Activated T-helper 1 cell treated with anti-CD3 and anti-CD28 coated beads, Interleukin-12 subunit alpha, Interleukin-12 subunit beta, Interleukin-2, Interleukin-4 antibody, amounts not matched to agents 30 ng/mL and 10 ng/mL and 1 ng/mL, durations not matched to agents 14 hours and 24 hours and 36 hours (primary cell): ENCODE measurements at regions of chr22 and their contacts with region 1.

Region 1: DNA sequence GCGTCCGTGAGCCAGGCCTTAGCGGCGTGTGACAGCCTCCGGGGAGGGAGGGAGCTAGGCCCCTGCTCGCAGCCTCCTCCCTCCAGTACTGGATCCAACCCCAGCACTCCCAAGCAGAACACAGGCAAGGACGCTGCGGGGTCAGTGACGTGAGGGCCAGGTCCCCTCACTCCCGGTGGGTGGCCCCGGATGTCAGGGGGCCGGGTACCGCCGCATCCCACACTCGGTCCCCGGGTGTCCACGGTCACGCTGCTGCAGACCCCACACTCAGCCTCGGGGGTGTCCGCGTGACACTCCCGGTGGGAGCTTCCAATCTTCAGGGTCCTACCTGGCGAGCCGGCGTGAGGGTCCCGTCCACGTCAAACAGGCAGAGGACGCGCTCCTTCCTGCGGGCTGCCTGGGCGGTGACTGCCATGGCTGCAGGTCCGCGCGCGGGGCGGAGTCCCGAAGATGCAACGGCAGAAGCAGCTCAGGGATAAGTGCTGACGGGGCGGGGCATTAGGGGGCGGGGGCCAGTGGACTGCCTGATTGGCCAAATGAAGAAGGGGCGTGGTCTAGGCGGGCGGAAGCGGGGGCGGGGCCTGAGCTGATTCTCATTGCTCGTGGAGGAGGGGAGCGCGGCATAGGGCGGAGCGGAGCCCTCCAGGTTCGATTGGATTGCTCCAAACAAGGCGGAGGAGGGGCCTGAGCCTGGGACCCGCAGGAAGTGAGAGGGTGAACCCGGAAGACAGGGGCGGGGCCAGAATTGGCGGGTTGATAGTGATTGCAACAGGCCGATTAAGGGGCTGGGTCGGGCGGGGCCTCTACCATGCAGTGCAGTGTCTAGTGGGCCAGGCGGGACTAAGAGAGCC is at the start of gene PMM1:
- DNase-seq: peak; percentile 100
- H3K4me3 Mint-ChIP-seq: peak within 1 kb of the TSS; percentile 92
- H3K27ac Mint-ChIP-seq: peak within 1 kb of the TSS; percentile 82
- H3K4me1 Mint-ChIP-seq: peaks cover 17% of the 10 kb centered on the region
- H3K27me3 Mint-ChIP-seq: no peaks in the 10 kb centered on the region
- total RNA-seq, gene PMM1: 21.4 and 22.6 TPM in 2 replicates

Region 2: DNA sequence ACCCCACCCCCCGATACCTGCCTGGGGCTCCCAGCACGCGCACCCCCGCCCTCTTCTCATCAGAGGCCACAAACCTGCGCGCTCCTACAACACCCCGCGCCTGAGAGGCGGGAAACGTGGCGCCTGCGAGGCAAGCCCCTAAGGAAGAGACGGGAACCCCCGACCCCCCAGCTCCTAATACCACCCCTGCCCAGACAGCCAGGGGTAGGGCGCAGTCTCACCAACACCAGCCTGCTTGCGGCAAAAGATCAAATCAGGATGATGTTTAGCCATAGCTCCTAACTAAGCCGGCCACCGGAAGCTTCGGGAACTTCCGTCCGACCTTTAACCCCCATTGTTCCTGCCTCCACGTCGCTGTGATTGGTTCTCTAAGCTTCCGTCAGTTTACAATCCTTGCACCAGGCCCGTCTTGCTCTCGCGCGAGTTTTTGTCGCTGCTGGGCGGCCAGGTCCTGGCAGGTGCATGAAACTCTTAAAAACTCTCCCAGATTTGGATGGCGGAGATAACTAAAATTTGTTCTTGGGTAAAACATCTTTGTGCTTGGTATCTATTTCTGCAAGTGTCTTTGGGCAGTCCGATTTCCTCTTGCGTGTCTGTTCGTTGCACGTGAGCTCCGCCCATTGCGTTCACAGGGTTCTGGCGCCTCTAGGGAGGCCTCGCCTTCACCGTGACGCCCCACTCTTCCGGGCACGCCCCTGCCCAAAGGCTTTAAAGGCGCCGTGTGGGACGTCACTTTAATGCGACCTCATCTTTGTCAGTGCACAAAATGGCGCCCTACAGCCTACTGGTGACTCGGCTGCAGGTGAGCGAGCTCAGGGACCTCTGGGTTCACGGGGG is 121.0 kb before region 1 on chr22 and contains the starts of genes ACO2 and PHF5A:
- intact Hi-C with region 1: loop called (anchors 1 kb)
- DNase-seq: peak; percentile 98
- H3K4me3 Mint-ChIP-seq: peak within 1 kb of the TSS; percentile 87
- H3K27ac Mint-ChIP-seq: peak within 1 kb of the TSS; percentile 99
- H3K4me1 Mint-ChIP-seq: peaks cover 22% of the 10 kb centered on the region
- H3K27me3 Mint-ChIP-seq: no peaks in the 10 kb centered on the region
- total RNA-seq, gene ACO2: 99.1 and 101 TPM in 2 replicates
- total RNA-seq, gene PHF5A: 83.7 and 96.8 TPM in 2 replicates

Region 3: DNA sequence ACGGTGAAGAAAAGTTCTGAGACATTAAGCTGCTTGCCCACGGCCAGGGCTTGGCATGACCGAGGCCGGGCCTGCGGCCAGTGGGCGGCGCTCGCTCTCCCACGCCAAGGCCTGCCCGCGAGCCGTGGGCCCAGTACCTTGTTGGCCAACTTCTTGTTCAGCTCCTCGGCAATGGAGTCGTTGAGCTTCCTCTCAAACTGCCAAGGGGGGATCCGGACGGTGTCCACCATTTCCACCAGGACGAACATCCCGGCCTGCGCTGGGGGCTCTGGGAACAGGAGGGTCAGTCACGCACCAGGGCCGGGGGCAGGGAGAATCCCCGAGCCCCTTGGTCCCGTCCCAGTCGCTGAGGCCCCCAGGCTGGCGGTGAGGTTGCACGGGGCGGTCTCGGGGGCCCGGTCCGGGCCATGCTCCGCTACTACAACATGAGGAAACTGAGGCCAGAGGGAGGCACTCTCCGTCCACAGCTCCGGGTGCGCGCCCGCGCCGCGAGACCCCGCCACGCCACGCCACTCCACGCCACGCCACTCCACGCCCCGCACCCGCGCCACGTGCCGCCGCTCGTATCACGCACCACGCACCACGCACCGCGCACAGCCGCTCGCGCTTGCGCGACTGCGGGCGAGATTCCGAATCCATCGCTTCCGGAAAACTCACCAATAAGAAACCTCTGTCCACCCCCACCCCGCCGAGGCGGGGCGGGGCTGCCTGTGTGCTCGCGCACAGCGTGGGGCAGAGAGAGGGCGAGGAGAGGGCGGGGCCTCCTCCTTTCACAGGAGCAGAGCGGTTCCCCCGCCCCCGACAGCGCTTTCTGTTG is 45.6 kb before region 1 on chr22 and contains the start of gene POLR3H:
- intact Hi-C with region 1: loop called (anchors 1 kb)
- DNase-seq: peak; percentile 97
- H3K4me3 Mint-ChIP-seq: peak within 1 kb of the TSS; percentile 93
- H3K27ac Mint-ChIP-seq: peak within 1 kb of the TSS; percentile 84
- H3K4me1 Mint-ChIP-seq: peaks cover 40% of the 10 kb centered on the region
- H3K27me3 Mint-ChIP-seq: peaks cover 3% of the 10 kb centered on the region
- total RNA-seq, gene POLR3H: 51.8 and 52.0 TPM in 2 replicates

Region 4: DNA sequence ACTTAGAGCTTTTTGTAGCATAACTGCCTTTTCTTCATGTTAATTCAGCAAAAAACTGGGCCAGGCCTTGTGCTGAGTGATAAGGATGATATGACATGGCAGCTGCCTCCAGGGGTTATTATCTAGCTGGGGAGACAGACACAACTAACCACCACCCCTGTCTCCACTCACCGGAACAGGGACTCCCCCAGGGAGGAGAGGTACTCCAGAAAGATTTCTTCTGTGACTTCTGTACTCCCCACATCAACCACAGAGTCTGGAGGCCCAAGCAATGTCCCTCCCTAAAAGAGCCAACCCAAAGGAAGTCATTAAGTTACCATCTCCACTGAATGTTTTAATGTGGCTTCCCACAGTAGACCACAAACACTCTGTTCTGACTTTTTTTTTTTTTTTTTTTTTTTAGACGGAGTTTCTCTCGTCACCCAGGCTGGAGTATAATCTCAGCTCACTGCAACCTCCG is 14.3 kb after region 1 on chr22:
- intact Hi-C with region 1: loop called (anchors 1 kb)
- DNase-seq: peak; percentile 66
- H3K4me3 Mint-ChIP-seq: no peak overlapping the region
- H3K27ac Mint-ChIP-seq: peak overlapping the region; percentile 62
- H3K4me1 Mint-ChIP-seq: peaks cover 44% of the 10 kb centered on the region
- H3K27me3 Mint-ChIP-seq: peaks cover 9% of the 10 kb centered on the region